Sigmoid colon (tissue), 7 donors: ENCODE measurements at regions of chr1 and their contacts with region 1.

Region 1: GRCh38 chr1:183234660-183235476 is 48.8 kb downstream of the LAMC2 start:
- DNase-seq: peak; percentile 92
- H3K4me3 ChIP-seq: peak overlapping the region; percentile 20 to 41 (median 33)
- H3K27ac ChIP-seq: peak overlapping the region; percentile 75 to 91 (median 81)
- H3K4me1 ChIP-seq: peaks cover 0 to 28% (median 17%) of the 10 kb centered on the region in 4 donors
- H3K27me3 ChIP-seq: no peaks in the 10 kb centered on the region
- CTCF ChIP-seq: peak; percentile 69 to 92 (median 74)
- EP300 ChIP-seq: peak in 1 of 4 donors; percentile 76
- POLR2A ChIP-seq: no peak

Region 2: GRCh38 chr1:183023601-183024316 is 211.1 kb before region 1 on chr1:
- intact Hi-C with region 1: loop called (anchors 5 kb)
- DNase-seq: peak; percentile 81
- H3K4me3 ChIP-seq: peak overlapping the region; percentile 86 to 97 (median 90)
- H3K27ac ChIP-seq: peak overlapping the region; percentile 100
- H3K4me1 ChIP-seq: peaks cover 0 to 41% (median 30%) of the 10 kb centered on the region in 4 donors
- H3K27me3 ChIP-seq: no peaks in the 10 kb centered on the region
- CTCF ChIP-seq: peak in 3 of 4 experiments; percentile 48 to 65 (median 63)
- EP300 ChIP-seq: no peak
- POLR2A ChIP-seq: no peak

Region 3: GRCh38 chr1:183139281-183139942 is 95.5 kb before region 1 on chr1:
- intact Hi-C with region 1: loop called (anchors 5 kb)
- DNase-seq: no peak
- H3K4me3 ChIP-seq: no peak overlapping the region
- H3K27ac ChIP-seq: peak overlapping the region; percentile 71 to 82 (median 78)
- H3K4me1 ChIP-seq: peaks cover 0 to 55% (median 44%) of the 10 kb centered on the region in 4 donors
- H3K27me3 ChIP-seq: no peaks in the 10 kb centered on the region
- CTCF ChIP-seq: no peak
- EP300 ChIP-seq: no peak
- POLR2A ChIP-seq: no peak

Region 4: DNA sequence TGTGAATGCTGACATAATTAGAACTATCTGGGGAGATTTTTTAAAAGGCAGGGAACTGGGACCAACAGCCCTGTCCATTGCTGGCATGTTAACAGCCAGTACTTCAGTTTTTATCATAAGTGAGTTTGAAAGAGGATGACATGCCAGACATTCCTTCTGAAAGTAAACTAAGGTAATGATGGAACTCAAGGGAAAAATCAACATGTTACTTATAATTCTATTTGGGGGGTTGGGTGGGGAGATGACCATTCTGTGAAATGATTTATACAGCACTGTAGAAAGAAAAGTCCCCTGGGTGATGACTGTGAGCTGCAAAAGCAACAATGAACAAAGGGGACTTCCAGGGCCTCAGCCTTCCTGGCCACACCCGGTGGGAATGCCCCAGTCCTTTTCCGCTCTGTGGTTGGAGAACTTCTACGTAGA is 54.2 kb before region 1 on chr1:
- intact Hi-C with region 1: loop called (anchors 5 kb)
- DNase-seq: no peak
- H3K4me3 ChIP-seq: no peak overlapping the region
- H3K27ac ChIP-seq: peak overlapping the region; percentile 68 to 85 (median 74)
- H3K4me1 ChIP-seq: peaks cover 0 to 24% (median 18%) of the 10 kb centered on the region in 4 donors
- H3K27me3 ChIP-seq: no peaks in the 10 kb centered on the region
- CTCF ChIP-seq: no peak
- EP300 ChIP-seq: no peak
- POLR2A ChIP-seq: no peak

Region 5: DNA sequence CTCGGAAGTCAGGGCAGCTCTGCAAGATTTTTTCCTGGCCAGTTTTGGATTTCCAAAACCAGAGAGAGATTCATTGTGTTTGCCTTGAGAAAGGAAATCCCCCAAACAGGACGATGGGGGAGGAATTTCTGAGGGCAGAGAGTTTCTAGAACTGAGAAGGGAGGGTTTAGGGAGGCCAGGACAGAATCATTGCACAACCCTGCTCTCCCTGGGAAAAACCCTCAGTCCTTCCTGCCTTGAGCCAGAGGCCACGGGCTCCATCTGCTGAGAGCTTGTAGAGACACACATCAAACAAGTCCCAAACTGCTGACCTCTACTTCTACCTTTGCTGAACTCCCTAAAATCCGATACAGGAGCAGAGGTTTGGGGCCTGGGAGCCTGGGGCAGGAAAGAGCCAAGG is 83.6 kb after region 1 on chr1:
- intact Hi-C with region 1: loop called (anchors 10 kb)
- DNase-seq: peak; percentile 95
- H3K4me3 ChIP-seq: no peak overlapping the region
- H3K27ac ChIP-seq: peak overlapping the region; percentile 75 to 80 (median 78)
- H3K4me1 ChIP-seq: peaks cover 0 to 57% (median 35%) of the 10 kb centered on the region in 4 donors
- H3K27me3 ChIP-seq: no peaks in the 10 kb centered on the region
- CTCF ChIP-seq: peak; percentile 38 to 68 (median 60)
- EP300 ChIP-seq: no peak
- POLR2A ChIP-seq: no peak